ENCODE measurements at regions of chr16 and their contacts with region 1.

Region 1: GRCh38 chr16:10737068-10737625 is 6.5 kb upstream of the NUBP1 start:
- DNase-seq: peak; percentile 76
- ATAC-seq: peak; percentile 68
- H3K4me3 ChIP-seq: peak overlapping the region; percentile 11 to 59 (median 13); a peak in 4 of 6 replicates
- H3K27ac ChIP-seq: no peak overlapping the region
- H3K4me1 ChIP-seq: peaks cover 29% of the 10 kb centered on the region
- H3K27me3 ChIP-seq: no peaks in the 10 kb centered on the region
- CTCF ChIP-seq: peak; percentile 93
- EP300 ChIP-seq: no peak
- POLR2A ChIP-seq: no peak
- RAD21 ChIP-seq: peak; percentile 96

Region 2: DNA sequence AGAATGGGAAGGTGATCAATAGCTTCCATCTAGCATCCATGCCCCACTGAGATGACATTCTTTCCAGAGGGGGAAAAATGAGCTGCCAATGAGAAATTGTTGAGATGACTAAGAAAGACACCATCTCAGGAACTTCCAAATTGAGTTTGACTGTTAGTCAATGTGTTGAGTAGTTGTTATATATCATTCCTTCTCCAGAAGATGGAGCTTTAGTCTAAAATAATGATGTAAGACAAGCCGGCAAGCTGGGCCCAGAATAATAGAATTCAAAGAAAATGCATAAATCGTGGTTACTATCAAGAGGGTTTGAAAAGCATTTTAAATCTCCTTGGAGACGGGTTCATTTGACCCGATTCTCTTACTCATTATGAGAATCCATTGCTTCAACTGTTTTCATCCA is 422.3 kb before region 1 on chr16:
- CTCF ChIA-PET with region 1: no interaction called
- POLR2A ChIA-PET with region 1: no interaction called
- in situ Hi-C with region 1: loop called (anchors 5 kb)
- intact Hi-C with region 1: no loop called
- DNase-seq: peak; percentile 65
- ATAC-seq: no peak
- H3K4me3 ChIP-seq: no peak overlapping the region
- H3K27ac ChIP-seq: no peak overlapping the region
- H3K4me1 ChIP-seq: peaks cover 73% of the 10 kb centered on the region
- H3K27me3 ChIP-seq: no peaks in the 10 kb centered on the region
- CTCF ChIP-seq: peak; percentile 80
- EP300 ChIP-seq: no peak
- POLR2A ChIP-seq: no peak
- RAD21 ChIP-seq: peak; percentile 74

Region 3: DNA sequence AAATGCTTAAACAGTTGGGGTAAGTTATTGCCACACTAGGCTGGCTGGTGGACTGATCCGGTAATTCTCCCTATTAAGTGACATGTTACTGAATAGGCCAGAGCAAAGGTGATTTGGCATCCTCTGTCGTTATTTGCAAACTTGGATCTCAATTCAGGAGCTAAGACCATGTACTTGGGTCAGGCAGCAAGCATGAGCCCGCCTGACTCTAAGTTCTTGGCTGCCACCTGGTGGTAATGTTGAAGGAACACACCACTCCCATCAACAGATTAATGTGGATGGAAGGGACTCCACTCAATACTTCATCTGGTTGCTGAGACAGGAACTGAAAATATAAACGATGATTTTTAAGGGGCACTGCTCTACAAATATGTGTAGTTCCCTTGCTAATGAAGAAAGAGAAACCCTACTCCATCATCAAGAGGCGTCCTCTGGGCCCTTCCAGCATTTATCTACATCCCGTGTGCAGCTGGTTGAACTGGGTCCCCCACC is 227.6 kb before region 1 on chr16:
- CTCF ChIA-PET with region 1: interaction called, 136 read pairs
- POLR2A ChIA-PET with region 1: interaction called, 3 read pairs
- in situ Hi-C with region 1: no loop called
- intact Hi-C with region 1: loop called (anchors 1 kb)
- DNase-seq: peak; percentile 91
- ATAC-seq: peak; percentile 97
- H3K4me3 ChIP-seq: no peak overlapping the region
- H3K27ac ChIP-seq: no peak overlapping the region
- H3K4me1 ChIP-seq: peaks cover 24% of the 10 kb centered on the region
- H3K27me3 ChIP-seq: no peaks in the 10 kb centered on the region; a peak in 1 of 5 replicates
- CTCF ChIP-seq: peak; percentile 100
- EP300 ChIP-seq: no peak
- POLR2A ChIP-seq: no peak
- RAD21 ChIP-seq: peak; percentile 98

Region 4: GRCh38 chr16:10566589-10566988 is 170.6 kb before region 1 on chr16:
- CTCF ChIA-PET with region 1: interaction called, 12 read pairs
- POLR2A ChIA-PET with region 1: no interaction called
- in situ Hi-C with region 1: no loop called
- intact Hi-C with region 1: no loop called
- DNase-seq: no peak
- ATAC-seq: peak; percentile 69
- H3K4me3 ChIP-seq: no peak overlapping the region
- H3K27ac ChIP-seq: no peak overlapping the region
- H3K4me1 ChIP-seq: peaks cover 17% of the 10 kb centered on the region
- H3K27me3 ChIP-seq: no peaks in the 10 kb centered on the region
- CTCF ChIP-seq: peak; percentile 62
- EP300 ChIP-seq: no peak
- POLR2A ChIP-seq: no peak
- RAD21 ChIP-seq: peak; percentile 38; the same call in 1 of the 2 replicates

Region 5: GRCh38 chr16:10594367-10594944 is 142.7 kb before region 1 on chr16:
- CTCF ChIA-PET with region 1: no interaction called
- POLR2A ChIA-PET with region 1: no interaction called
- in situ Hi-C with region 1: no loop called
- intact Hi-C with region 1: no loop called
- DNase-seq: no peak
- ATAC-seq: peak; percentile 18; the same call in 2 of the 3 replicates
- H3K4me3 ChIP-seq: no peak overlapping the region
- H3K27ac ChIP-seq: no peak overlapping the region
- H3K4me1 ChIP-seq: peaks cover 28% of the 10 kb centered on the region
- H3K27me3 ChIP-seq: peaks cover 1 to 35% of the 10 kb centered on the region in 2 experiments; a peak in 4 of 5 replicates
- CTCF ChIP-seq: peak; percentile 55
- EP300 ChIP-seq: no peak
- POLR2A ChIP-seq: no peak
- RAD21 ChIP-seq: 0 out of 2 replicates have a peak, but pooled peaks have one; percentile 23

Region 6: GRCh38 chr16:10641953-10642949 is 94.9 kb before region 1 on chr16:
- CTCF ChIA-PET with region 1: no interaction called
- POLR2A ChIA-PET with region 1: no interaction called
- in situ Hi-C with region 1: no loop called
- intact Hi-C with region 1: loop called (anchors 5 kb)
- DNase-seq: peak; percentile 60
- ATAC-seq: peak; percentile 78
- H3K4me3 ChIP-seq: peak overlapping the region in 2 of 3 experiments; percentile 1 to 49; a peak in 3 of 6 replicates
- H3K27ac ChIP-seq: peak overlapping the region; percentile 24
- H3K4me1 ChIP-seq: peaks cover 80% of the 10 kb centered on the region
- H3K27me3 ChIP-seq: no peaks in the 10 kb centered on the region; a peak in 1 of 5 replicates
- CTCF ChIP-seq: peak; percentile 14
- EP300 ChIP-seq: peak; percentile 28 to 80; a peak in 2 of 4 replicates
- POLR2A ChIP-seq: no peak
- RAD21 ChIP-seq: no peak

Region 7: GRCh38 chr16:10655415-10655977 is 81.7 kb before region 1 on chr16:
- CTCF ChIA-PET with region 1: no interaction called
- POLR2A ChIA-PET with region 1: no interaction called
- in situ Hi-C with region 1: no loop called
- intact Hi-C with region 1: no loop called
- DNase-seq: no peak
- ATAC-seq: no peak
- H3K4me3 ChIP-seq: no peak overlapping the region; a peak in 1 of 6 replicates
- H3K27ac ChIP-seq: no peak overlapping the region
- H3K4me1 ChIP-seq: peaks cover 94% of the 10 kb centered on the region
- H3K27me3 ChIP-seq: no peaks in the 10 kb centered on the region
- CTCF ChIP-seq: no peak
- EP300 ChIP-seq: no peak
- POLR2A ChIP-seq: no peak
- RAD21 ChIP-seq: no peak

Region 8: DNA sequence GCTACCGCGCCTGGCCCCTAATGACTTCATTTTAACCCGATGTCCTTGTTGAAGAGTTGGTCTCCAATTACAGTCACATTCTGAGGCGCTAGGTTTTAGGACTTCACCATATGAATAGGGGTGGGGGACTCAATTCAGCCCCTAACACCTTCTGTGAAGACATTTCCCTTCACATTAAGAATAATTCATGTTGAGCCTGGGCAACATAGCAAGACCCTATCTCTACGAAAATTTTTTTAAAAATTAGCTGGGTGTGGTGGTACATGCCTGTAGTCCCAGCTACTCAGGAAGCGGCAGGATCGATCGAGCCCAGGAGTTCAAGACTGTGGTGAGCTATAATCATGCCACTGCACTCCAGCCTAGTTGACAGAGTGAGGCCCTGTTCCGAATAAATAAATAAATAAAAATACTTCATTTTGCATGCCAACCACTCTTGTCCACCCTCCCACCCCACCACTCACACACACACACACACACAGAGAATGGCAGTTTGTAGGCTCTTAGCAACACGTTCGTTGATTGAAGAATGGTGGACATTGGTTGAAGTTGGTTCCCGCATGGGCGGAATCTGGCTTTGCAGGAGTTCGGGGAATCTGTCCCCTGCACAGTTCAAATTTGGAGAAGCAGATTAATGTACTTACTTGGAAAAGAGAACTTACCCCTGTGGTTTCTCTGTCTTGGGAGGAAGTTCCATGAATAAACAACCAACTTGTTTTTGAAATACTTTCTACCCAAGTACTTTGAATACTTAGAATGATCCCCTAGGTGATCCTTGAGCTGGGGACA is 109.3 kb after region 1 on chr16:
- CTCF ChIA-PET with region 1: no interaction called
- POLR2A ChIA-PET with region 1: no interaction called
- in situ Hi-C with region 1: no loop called
- intact Hi-C with region 1: no loop called
- DNase-seq: no peak
- ATAC-seq: no peak
- H3K4me3 ChIP-seq: no peak overlapping the region
- H3K27ac ChIP-seq: no peak overlapping the region
- H3K4me1 ChIP-seq: peaks cover 6% of the 10 kb centered on the region; the same call in 1 of the 2 replicates
- H3K27me3 ChIP-seq: peaks cover 0 to 25% of the 10 kb centered on the region in 2 experiments; a peak in 4 of 5 replicates
- CTCF ChIP-seq: no peak
- EP300 ChIP-seq: no peak
- POLR2A ChIP-seq: no peak
- RAD21 ChIP-seq: no peak